Posterior vena cava (tissue), 2 donors: ENCODE measurements at regions of chr14 and their contacts with region 1.

Region 1: DNA sequence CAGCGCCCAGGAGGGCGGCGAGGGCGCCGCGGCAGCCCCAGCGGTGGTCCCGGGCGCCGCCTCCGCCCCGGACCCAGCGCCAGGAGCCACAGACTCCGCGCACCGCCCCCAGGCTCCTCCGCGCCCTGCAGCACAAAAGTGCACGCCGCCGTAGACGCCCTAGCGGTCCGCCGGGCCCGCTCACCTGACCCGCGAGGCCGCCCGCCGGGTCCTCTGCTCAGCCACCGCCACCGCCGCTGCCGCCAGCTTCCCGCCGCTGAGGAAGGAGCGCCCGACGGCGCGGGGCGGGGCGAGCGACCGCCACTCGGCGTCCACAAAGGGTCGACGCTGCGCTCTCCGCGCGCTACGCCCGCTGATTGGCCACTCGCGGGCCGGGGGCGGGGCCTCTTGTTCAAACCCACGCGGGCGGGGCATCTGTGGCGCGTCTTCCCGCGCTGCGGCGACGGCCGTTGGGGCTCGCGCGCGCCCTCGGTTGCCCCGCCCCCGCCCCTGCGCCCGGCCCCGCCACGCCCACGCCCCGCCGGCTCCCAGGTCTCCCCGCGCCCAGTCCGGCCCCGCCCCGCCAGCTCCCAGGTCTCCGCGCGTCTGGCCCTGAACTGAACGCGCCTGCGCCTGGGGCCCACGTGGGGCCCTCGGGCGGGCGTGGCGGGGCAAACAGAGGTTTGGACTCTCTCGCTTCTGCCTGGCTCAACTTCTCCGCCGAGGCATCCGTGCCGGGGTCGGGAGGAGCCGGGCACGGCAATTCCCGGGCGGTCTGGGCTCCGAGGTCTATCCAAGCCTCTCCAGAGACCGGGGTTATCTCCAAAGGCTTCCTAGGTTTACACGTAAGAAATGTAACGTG is at the start of gene CDCA4:
- DNase-seq: peak; percentile 99
- total RNA-seq, gene CDCA4: 4.3 to 4.8 TPM

Region 2: GRCh38 chr14:104932676-104933631 is 88.1 kb before region 1 on chr14:
- intact Hi-C with region 1: no loop called
- DNase-seq: peak; percentile 97

Region 3: DNA sequence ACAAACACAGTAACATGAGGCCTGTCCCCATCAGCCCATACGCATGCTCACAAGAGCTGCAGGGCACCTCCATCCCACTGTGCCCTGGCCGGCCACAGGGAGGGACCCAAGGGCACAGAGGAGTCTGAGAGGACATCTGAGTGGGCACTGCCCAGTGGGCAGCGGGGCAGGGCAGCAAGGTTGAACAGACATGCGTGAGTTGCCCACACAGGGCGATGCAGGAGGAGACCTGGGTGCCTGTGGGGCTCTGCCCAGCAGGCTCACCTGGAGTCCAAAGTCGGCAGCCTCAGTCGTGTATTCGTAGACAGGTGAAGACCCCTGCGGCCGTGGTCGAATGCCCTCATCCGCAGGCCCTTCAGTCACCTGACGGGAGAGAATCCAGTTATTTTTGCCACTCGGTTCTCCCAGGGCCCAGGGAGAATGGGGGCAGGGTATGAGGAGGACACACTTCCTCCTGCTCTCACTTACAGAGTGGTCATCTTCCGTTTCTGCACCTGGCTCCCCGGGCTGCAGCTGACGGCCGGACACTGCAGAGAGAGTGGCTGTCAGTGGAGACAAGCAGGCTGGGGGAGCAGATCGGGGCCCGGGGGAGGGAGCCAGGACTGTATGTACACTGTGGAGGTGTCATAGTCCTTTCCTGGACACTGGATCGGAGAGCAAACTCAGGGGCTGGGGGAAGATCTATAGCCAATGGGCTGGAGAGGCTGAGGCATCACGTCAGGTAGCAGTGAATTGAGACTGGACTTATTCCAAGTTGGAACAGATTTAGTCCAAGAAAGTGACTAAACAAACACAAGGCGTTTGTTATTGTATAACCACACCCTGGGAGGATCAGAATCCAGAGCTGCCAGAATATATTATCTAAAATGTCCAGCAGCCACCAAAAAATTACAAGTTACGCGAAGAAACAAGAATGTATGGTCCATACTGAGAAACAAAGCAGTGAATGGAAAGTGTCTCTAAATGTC is 63.6 kb before region 1 on chr14:
- intact Hi-C with region 1: no loop called
- DNase-seq: peak; percentile 72

Region 4: GRCh38 chr14:104976198-104977007 is 44.6 kb before region 1 on chr14:
- intact Hi-C with region 1: loop called (anchors 1 to 5 kb)
- DNase-seq: peak; percentile 96

Region 5: DNA sequence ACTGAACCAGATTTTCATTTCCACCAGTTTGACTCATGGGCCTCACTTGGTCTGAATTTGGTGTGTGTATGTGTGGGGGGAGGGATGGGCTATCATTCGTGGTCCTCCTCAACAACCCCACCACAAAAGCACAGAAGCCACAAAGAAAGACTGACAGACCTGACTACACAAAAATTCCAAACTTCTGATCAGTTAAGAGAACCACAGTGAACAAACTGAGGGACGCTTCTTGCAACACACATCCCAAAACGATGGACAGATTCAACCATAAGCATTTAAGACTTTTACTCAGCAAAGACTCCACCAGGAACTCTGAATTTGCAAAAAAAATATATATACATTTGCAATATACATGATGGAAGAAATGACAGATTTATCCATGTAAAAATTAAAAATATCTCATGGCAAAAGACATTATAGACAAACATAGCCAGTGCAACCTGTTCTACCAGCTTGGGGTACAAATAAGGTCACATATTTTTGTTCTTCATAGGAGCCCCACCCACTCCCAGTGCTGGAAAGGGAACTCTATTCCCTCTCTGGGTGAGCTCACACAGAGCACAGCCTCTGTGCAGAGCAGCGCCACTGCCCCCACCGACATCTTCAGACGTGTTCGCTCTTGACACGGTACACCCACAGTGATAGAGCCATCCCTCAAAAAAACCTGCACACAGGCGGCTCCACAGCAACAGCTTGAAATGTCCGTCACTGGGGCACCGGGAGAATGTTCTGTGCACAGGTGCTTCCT is 97.8 kb after region 1 on chr14:
- intact Hi-C with region 1: no loop called
- DNase-seq: peak; percentile 29